HAP-1 (cell line): ENCODE measurements at regions of chr1 and their contacts with region 1.

Region 1: GRCh38 chr1:242023805-242024204 is 24.9 kb upstream of the MAP1LC3C start:
- DNase-seq: no peak
- H3K4me3 ChIP-seq: no peak overlapping the region
- H3K4me1 ChIP-seq: peaks cover 9% of the 10 kb centered on the region
- H3K27me3 ChIP-seq: no peaks in the 10 kb centered on the region

Region 2: DNA sequence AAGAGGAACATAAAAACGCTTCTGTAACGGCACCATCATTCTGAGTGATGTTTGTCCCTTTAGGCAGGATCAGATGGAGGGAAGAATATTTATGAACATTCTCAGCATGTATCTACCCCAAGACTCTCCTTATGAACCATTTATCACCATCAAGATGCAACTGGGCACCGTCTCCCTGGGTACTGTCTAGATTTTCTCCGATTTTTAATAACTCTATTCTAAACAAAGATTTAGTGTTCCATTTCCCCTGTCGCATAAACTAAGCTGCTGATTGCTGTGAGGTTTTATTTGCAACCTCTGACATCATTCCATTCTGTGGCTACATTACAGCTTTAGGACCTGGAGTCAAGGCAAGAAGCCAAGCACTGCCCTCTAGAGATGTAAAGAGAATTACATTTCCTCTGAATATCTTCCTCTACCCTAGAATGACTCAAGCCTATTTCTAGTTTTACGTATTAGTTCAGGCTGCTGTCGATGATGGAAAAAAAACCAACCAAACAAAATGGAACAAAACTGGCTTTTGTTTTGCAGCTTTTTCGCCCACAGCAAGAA is 105.2 kb after region 1 on chr1:
- in situ Hi-C with region 1: loop called (anchors 5 kb)
- DNase-seq: peak; percentile 50 to 74
- H3K4me3 ChIP-seq: no peak overlapping the region
- H3K4me1 ChIP-seq: no peaks in the 10 kb centered on the region
- H3K27me3 ChIP-seq: no peaks in the 10 kb centered on the region

Region 3: GRCh38 chr1:242448910-242449645 is 425.3 kb after region 1 on chr1:
- in situ Hi-C with region 1: loop called (anchors 10 kb)
- DNase-seq: peak in 1 of 2 experiments; percentile 4
- H3K4me3 ChIP-seq: no peak overlapping the region
- H3K4me1 ChIP-seq: peaks cover 22% of the 10 kb centered on the region
- H3K27me3 ChIP-seq: no peaks in the 10 kb centered on the region